Panc1 (cell line): ENCODE measurements at regions of chr11 and their contacts with region 1.

Region 1: DNA sequence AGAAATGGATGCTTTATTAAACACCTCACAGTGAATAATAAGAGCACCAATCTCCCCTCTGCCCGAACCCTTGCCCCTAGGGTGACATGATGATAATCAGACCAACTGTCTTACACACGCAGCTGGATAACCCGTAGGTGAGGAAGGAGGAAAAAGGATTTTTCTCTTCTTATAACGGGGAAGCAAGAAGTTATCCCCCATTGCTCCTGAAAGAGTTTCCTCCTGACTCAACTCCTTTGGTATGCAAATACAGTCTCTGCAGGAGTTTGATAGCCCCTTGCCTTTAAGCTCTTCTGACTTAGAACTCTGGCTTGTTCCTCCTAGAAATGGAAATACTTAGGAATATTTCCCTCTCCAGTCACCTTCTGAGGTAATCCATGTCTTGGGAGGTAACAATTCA is 455.8 kb downstream of the TMEM135 start:
- DNase-seq: no peak
- ATAC-seq: no peak
- H3K4me3 ChIP-seq: no peak overlapping the region
- H3K27ac ChIP-seq: no peak overlapping the region
- H3K4me1 ChIP-seq: no peaks in the 10 kb centered on the region
- H3K27me3 ChIP-seq: no peaks in the 10 kb centered on the region
- CTCF ChIP-seq: no peak

Region 2: GRCh38 chr11:87456499-87456898 is 37.0 kb before region 1 on chr11:
- CTCF ChIA-PET with region 1: no interaction called
- POLR2A ChIA-PET with region 1: no interaction called
- in situ Hi-C with region 1: no loop called
- intact Hi-C with region 1: loop called (anchors 2 kb)
- DNase-seq: no peak
- ATAC-seq: no peak
- H3K4me3 ChIP-seq: no peak overlapping the region
- H3K27ac ChIP-seq: no peak overlapping the region
- H3K4me1 ChIP-seq: no peaks in the 10 kb centered on the region
- H3K27me3 ChIP-seq: no peaks in the 10 kb centered on the region
- CTCF ChIP-seq: no peak

Region 3: GRCh38 chr11:87545858-87546257 is 52.3 kb after region 1 on chr11:
- CTCF ChIA-PET with region 1: no interaction called
- POLR2A ChIA-PET with region 1: no interaction called
- in situ Hi-C with region 1: no loop called
- intact Hi-C with region 1: no loop called
- DNase-seq: no peak
- ATAC-seq: no peak
- H3K4me3 ChIP-seq: no peak overlapping the region
- H3K27ac ChIP-seq: no peak overlapping the region
- H3K4me1 ChIP-seq: no peaks in the 10 kb centered on the region
- H3K27me3 ChIP-seq: no peaks in the 10 kb centered on the region
- CTCF ChIP-seq: no peak